ENCODE measurements at regions of chr9 and their contacts with region 1.

Region 1: DNA sequence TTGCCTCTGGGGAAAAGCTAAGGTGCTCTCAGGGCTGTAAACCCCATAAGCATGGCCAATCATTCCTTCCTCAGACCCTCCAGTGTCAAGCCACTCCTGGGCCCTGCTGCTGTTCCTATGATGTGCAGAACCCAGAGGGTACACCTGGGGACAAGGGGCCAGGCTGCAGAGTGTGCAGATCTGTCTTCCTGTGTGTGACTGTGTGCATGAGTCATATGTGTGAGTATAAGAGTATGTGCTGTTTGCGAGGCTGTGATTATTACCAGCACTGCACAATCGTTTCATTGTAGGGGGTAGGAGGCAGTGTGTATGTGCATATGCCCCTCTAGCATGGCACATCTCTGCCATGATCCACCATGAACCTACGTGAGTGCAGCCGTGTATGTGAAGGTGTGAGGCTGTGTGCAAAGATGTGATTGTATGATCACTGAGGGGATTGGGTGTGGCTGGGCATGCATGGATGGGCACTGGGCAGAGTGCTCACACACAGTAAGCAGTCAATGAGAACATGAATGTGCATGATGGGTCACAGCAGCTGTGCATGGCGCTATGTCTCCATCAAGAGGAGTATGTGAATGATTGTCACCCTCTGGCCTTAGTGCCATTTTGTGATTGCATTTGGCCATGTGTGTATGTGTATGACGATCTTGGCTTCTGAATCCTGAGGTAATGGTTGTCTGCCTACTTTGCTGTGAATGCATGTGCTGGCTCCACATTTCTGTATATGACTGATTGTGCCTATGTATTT is 2.4 kb upstream of the OR1K1 start:
- DNase-seq: no peak
- ATAC-seq: no peak

Region 2: DNA sequence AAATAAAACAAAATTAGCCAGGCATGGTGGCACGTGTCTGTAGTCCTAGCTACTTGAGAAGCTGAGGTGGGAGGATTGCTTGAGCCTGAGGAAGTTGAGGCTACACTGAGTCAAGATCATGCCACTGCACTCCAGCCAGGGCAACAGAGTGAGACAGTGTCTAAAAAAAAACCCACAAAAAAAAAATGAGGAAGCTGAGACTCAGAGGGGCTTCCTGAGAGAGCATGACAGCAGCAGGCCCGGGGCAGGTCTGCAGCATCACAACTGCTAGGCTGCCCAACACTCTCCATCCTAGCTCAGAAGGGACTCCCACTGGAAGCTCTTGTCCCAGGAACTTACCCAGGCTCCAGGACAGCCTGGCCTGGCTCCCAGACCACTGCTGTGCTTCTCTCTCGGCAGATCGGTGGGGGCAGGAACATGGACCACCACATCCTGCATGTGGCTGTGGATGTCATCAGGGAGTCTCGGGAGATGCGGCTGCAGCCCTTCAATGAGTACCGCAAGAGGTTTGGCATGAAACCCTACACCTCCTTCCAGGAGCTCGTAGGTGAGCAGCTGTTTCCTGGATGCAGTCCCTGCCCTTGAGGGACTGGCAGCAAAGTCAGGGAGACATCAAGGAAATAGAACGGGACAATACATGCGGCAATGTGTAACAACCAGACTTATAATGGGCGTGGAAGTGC is 407.6 kb before region 1 on chr9:
- intact Hi-C with region 1: loop called in 1 of 2 experiments (anchors 10 kb)
- DNase-seq: no peak
- ATAC-seq: no peak

Region 3: DNA sequence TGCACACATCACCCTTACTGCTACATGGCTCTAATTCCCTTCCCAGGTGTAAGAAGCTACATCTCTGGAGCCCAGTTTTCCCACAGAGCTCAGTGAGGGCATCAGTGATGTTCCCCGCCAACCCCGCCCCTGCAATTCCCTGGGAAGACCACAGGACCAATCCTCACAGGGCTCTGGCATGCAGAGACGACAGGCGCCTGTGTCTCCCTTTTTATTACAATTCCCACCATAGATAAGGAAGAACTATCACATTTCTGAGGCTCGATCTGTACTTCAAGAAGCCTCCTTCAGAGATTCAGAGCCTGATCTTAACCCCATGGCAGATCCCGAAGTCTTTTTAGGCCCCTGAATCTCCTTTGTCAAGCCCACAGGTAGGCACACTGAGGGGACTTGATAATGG is 55.5 kb before region 1 on chr9 and contains the start of gene OR1L6:
- intact Hi-C with region 1: no loop called
- DNase-seq: no peak
- ATAC-seq: no peak
- total RNA-seq, gene OR1L6: not detected

Measured in left cardiac atrium (tissue), 4 donors.